ENCODE measurements at regions of chr6 and their contacts with region 1.

Region 1: DNA sequence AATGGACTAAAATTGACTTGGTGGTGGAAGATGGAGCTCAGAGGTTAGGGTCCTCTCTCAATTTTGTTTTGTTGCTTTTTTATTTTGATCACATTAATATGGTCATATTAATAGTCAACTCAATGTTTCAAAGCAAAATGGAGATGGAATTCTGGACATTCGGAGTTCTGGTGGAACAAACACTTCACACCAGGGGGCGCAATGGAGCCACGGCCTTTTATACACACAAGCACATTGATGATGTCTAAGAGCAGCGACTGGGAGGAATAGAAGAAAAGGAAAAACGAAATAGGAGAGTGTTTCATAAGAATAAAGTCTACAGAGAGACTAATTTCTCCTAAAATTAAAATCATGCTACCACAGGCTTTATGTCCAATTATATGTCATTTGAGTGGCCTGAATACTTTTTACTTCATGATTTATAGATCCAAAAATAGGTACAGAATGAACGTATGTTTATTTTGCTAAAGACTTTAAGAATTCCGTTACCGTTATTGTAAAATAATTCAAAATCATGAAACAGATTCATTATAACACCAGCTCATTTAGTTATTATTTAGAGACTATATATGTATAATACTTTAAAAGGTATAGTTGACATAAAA is 197.6 kb upstream of the SASH1 start:
- DNase-seq: peak; percentile 33
- ATAC-seq: no peak
- H3K4me3 ChIP-seq: no peak overlapping the region
- H3K4me3 Mint-ChIP-seq: no peak overlapping the region
- H3K27ac ChIP-seq: no peak overlapping the region
- H3K27ac Mint-ChIP-seq: no peak overlapping the region
- H3K4me1 ChIP-seq: no peaks in the 10 kb centered on the region
- H3K4me1 Mint-ChIP-seq: peaks cover 3% of the 10 kb centered on the region
- H3K27me3 ChIP-seq: no peaks in the 10 kb centered on the region
- H3K27me3 Mint-ChIP-seq: peaks cover 22% of the 10 kb centered on the region
- CTCF ChIP-seq: peak; percentile 76

Region 2: DNA sequence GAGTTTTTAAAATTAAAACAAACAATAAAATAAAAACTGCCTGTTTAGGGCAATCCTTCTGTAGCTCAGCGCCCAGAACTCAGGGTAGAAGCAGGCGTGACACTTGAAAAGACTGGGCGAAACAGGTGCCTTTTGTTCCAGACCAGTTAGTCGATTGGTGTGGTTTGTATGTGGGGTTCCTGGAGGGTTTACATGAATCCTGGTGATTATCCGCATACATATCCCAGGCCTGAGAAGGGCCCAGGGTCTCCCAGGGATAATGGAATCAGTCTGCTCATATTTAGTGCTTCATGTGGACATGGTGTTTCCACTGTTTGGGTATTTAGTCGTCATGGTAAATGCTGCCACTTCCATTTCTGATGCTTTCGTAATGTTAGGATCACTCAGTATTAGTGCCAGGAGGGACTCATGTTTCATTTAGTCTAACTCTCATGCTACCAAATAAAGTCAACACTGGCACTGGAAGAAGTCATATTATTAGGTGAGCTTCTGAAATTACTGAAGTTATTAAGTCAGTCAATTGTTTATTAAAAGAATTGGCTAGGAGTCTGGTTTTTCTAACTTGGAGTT is 520.0 kb before region 1 on chr6:
- CTCF ChIA-PET with region 1: no interaction called
- POLR2A ChIA-PET with region 1: no interaction called
- intact Hi-C with region 1: no loop called
- DNase-seq: no peak
- ATAC-seq: no peak
- H3K4me3 ChIP-seq: no peak overlapping the region
- H3K4me3 Mint-ChIP-seq: no peak overlapping the region
- H3K27ac ChIP-seq: no peak overlapping the region
- H3K27ac Mint-ChIP-seq: no peak overlapping the region
- H3K4me1 ChIP-seq: no peaks in the 10 kb centered on the region
- H3K4me1 Mint-ChIP-seq: no peaks in the 10 kb centered on the region
- H3K27me3 ChIP-seq: no peaks in the 10 kb centered on the region
- H3K27me3 Mint-ChIP-seq: no peaks in the 10 kb centered on the region
- CTCF ChIP-seq: no peak

Region 3: DNA sequence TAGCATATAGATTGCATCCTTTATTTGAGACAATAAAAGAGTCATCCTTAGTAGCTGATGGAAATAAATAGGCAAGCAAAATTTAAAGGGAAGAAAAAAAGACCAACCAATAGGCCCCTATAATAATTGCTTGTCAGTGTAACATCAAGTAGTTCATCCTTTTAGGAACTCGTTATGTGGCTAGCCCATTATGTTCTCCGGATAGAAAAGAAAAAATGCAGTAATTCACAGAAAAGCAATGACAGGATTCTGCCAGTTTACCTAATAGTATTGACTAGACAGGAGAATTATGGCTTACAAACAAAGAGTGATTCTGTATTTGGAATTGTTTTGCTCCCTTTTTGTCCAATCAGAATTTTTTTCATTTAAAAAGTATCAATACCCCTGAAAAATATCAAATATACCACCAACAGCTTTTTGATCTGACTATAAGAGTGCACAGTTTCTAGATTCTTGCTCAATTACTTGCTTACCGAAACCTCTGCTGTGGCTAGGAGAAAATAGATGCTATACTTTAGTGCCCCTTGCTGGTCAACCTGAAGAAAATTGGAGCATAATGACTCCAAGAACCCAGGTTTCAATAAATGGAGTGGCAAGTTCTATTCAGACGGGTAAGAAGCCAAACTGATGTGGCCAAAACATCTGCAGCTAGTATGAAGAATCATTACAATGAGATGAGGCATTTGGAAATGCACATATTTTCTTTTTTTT is 106.1 kb after region 1 on chr6:
- CTCF ChIA-PET with region 1: interaction called, 3 read pairs
- POLR2A ChIA-PET with region 1: no interaction called
- intact Hi-C with region 1: loop called (anchors 10 kb)
- DNase-seq: no peak
- ATAC-seq: no peak
- H3K4me3 ChIP-seq: no peak overlapping the region
- H3K4me3 Mint-ChIP-seq: no peak overlapping the region
- H3K27ac ChIP-seq: no peak overlapping the region
- H3K27ac Mint-ChIP-seq: no peak overlapping the region
- H3K4me1 ChIP-seq: no peaks in the 10 kb centered on the region
- H3K4me1 Mint-ChIP-seq: no peaks in the 10 kb centered on the region
- H3K27me3 ChIP-seq: no peaks in the 10 kb centered on the region
- H3K27me3 Mint-ChIP-seq: peaks cover 11% of the 10 kb centered on the region
- CTCF ChIP-seq: no peak

Region 4: DNA sequence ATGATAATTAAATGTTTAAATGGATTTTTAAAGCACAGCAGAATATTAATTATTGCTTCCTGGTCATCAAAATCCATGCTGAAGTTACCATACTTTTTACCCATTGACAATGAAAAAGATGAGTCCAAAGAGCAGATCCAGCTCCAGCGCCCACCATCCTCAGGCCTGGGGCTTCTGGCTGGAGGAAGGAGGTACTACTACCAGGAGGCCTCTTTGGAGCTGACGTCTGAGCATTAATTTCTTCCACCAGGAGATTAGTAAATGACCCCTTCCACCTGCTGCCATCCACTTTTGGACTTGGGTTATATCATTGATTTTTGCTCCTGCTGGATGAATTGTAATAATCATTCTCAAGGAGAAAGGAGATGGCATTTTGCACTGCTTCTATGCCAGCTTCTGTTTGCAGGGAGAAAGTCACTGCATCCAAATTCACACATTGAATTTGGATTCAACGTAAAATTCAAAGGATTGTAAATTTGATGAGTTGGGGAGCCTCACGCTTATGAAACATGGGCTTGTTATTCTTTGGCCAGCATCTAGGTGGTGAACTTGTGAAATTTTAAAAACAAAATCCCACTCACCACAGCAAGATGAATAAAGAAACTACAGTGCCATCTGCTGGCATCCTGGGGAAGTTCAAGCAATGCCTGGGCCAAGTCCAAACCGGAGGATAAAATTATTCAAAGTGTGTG is 319.4 kb after region 1 on chr6:
- CTCF ChIA-PET with region 1: interaction called, 3 read pairs
- POLR2A ChIA-PET with region 1: no interaction called
- intact Hi-C with region 1: loop called (anchors 2 kb)
- DNase-seq: peak; percentile 62
- ATAC-seq: peak; percentile 72
- H3K4me3 ChIP-seq: no peak overlapping the region
- H3K4me3 Mint-ChIP-seq: no peak overlapping the region
- H3K27ac ChIP-seq: no peak overlapping the region
- H3K27ac Mint-ChIP-seq: no peak overlapping the region
- H3K4me1 ChIP-seq: no peaks in the 10 kb centered on the region
- H3K4me1 Mint-ChIP-seq: peaks cover 2% of the 10 kb centered on the region
- H3K27me3 ChIP-seq: peaks cover 0 to 2% (median 0%) of the 10 kb centered on the region in 4 experiments
- H3K27me3 Mint-ChIP-seq: peaks cover 24% of the 10 kb centered on the region
- CTCF ChIP-seq: peak; percentile 99

Measured in B cell (primary cell).